ENCODE measurements at regions of chr12 and their contacts with region 1.

Region 1: DNA sequence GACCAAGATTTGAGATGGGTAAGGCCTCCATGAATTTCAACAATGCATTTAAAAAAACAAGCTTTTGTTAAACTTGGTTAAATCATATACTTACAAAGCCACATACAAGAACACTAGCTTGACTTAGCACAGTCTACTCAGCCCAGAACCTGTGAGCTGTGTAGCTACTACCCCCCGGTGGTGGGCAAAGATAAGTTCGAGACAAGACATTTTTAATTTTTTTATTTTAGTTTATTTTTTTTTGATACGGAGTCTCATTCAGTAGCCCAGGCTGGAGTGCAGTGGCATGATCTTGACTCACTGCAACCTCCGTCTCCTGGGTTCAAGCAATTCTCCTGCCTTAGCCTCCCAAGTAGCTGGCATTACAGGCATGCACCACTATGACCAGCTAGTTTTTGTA is 3.7 kb upstream of the NECAP1 start:
- DNase-seq: peak in 1 of 5 donors; percentile 20
- ATAC-seq: no peak
- H3K4me3 ChIP-seq: no peak overlapping the region
- H3K27ac ChIP-seq: no peak overlapping the region
- H3K4me1 ChIP-seq: peaks cover 0 to 27% (median 11%) of the 10 kb centered on the region in 12 donors
- H3K27me3 ChIP-seq: peaks cover 0 to 5% (median 0%) of the 10 kb centered on the region in 9 donors
- CTCF ChIP-seq: peak in 7 of 12 donors; percentile 12 to 41 (median 16)
- POLR2A ChIP-seq: no peak

Region 2: GRCh38 chr12:7859552-7859951 is 218.8 kb before region 1 on chr12:
- intact Hi-C with region 1: loop called in 1 of 10 experiments (anchors 10 kb)
- DNase-seq: no peak
- ATAC-seq: no peak
- H3K4me3 ChIP-seq: no peak overlapping the region
- H3K27ac ChIP-seq: no peak overlapping the region
- H3K4me1 ChIP-seq: peaks cover 0 to 4% (median 0%) of the 10 kb centered on the region in 12 donors
- H3K27me3 ChIP-seq: peaks cover 0 to 11% (median 0%) of the 10 kb centered on the region in 9 donors
- CTCF ChIP-seq: no peak
- POLR2A ChIP-seq: no peak

Region 3: GRCh38 chr12:8026291-8026900 is 52.0 kb before region 1 on chr12:
- intact Hi-C with region 1: loop called in 4 of 10 experiments (anchors 2 to 10 kb)
- DNase-seq: peak; percentile 94 to 98 (median 98)
- ATAC-seq: peak; percentile 98 to 100 (median 98)
- H3K4me3 ChIP-seq: peak overlapping the region; percentile 40 to 84 (median 78)
- H3K27ac ChIP-seq: peak overlapping the region; percentile 98 to 100 (median 100)
- H3K4me1 ChIP-seq: peaks cover 0 to 10% (median 4%) of the 10 kb centered on the region in 12 donors
- H3K27me3 ChIP-seq: no peaks in the 10 kb centered on the region
- CTCF ChIP-seq: no peak
- POLR2A ChIP-seq: peak in 1 of 2 donors; percentile 57

Region 4: DNA sequence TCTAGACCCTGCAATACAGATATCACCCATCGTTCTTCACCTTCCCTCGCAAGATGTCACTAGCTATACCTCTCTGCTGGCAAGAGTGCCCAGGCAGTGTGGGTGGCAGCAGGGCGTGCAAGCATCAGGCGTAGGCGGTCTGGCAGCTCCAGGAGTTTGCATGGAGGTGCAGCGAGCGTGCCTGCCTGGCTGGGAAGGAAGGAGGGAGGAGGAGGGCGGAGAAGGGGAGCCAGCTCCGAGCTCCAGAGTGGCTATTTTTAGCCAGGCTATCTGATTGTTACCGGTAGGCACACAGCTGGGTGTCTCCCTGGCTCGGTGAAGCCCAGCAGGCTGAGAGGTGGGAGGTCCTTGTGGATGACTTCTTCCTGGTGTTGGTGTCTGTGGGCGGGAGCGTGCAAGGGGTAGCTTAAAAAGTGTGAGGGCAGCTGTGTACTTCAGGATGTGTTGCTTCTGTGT is 39.7 kb before region 1 on chr12:
- intact Hi-C with region 1: loop called in 7 of 10 experiments (anchors 2 to 10 kb)
- DNase-seq: peak; percentile 60 to 87 (median 72)
- ATAC-seq: peak; percentile 86 to 92 (median 90)
- H3K4me3 ChIP-seq: peak overlapping the region in 9 of 12 donors; percentile 5 to 48 (median 27)
- H3K27ac ChIP-seq: peak overlapping the region in 11 of 12 donors; percentile 70 to 99 (median 98)
- H3K4me1 ChIP-seq: peaks cover 11 to 63% (median 55%) of the 10 kb centered on the region in 12 donors
- H3K27me3 ChIP-seq: no peaks in the 10 kb centered on the region
- CTCF ChIP-seq: no peak
- POLR2A ChIP-seq: no peak

Region 5: DNA sequence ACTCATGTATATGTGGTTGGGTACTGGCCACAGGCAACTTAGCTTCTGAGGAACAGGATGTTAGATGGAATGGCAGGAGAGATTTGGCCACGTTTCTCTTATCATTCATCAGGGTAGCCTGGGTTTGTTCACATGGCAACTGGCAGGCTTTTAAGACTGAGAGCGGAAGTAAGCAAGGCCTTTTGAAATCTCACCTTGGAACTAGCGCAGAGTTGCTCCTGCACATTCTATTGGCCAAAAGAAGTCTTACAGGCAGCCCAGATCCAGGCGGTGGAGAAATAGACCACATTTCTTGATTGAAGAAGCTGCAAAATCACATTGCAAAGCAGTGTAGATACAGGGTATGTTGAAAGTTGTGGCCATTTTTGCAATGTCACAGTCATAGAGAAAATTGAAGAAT is 48.7 kb after region 1 on chr12:
- intact Hi-C with region 1: no loop called
- DNase-seq: no peak
- ATAC-seq: no peak
- H3K4me3 ChIP-seq: no peak overlapping the region
- H3K27ac ChIP-seq: no peak overlapping the region
- H3K4me1 ChIP-seq: peaks cover 0 to 15% (median 0%) of the 10 kb centered on the region in 12 donors
- H3K27me3 ChIP-seq: no peaks in the 10 kb centered on the region
- CTCF ChIP-seq: no peak
- POLR2A ChIP-seq: no peak

Region 6: GRCh38 chr12:8156845-8157244 is 78.4 kb after region 1 on chr12 and contains the start of gene ZNF705A:
- intact Hi-C with region 1: no loop called
- DNase-seq: no peak
- ATAC-seq: no peak
- H3K4me3 ChIP-seq: no peak within 1 kb of the TSS
- H3K27ac ChIP-seq: peak within 1 kb of the TSS in 1 of 12 donors; percentile 84
- H3K4me1 ChIP-seq: peaks cover 0 to 7% (median 0%) of the 10 kb centered on the region in 12 donors
- H3K27me3 ChIP-seq: peaks cover 0 to 6% (median 0%) of the 10 kb centered on the region in 9 donors
- CTCF ChIP-seq: no peak
- POLR2A ChIP-seq: no peak
- total RNA-seq, gene ZNF705A: 0.23 TPM in 1 of 9 donors, not detected in the others

Region 7: GRCh38 chr12:8226355-8226754 is 148.0 kb after region 1 on chr12:
- intact Hi-C with region 1: loop called in 1 of 10 experiments (anchors 10 kb)
- DNase-seq: no peak
- ATAC-seq: no peak
- H3K4me3 ChIP-seq: no peak overlapping the region
- H3K27ac ChIP-seq: no peak overlapping the region
- H3K4me1 ChIP-seq: peaks cover 0 to 12% (median 0%) of the 10 kb centered on the region in 12 donors
- H3K27me3 ChIP-seq: peaks cover 0 to 14% (median 0%) of the 10 kb centered on the region in 9 donors
- CTCF ChIP-seq: no peak
- POLR2A ChIP-seq: no peak